Activated CD4-positive, alpha-beta T cell treated with anti-CD3 and anti-CD28 coated beads for 36 hours (primary cell): ENCODE measurements at regions of chr10 and their contacts with region 1.

Region 1: DNA sequence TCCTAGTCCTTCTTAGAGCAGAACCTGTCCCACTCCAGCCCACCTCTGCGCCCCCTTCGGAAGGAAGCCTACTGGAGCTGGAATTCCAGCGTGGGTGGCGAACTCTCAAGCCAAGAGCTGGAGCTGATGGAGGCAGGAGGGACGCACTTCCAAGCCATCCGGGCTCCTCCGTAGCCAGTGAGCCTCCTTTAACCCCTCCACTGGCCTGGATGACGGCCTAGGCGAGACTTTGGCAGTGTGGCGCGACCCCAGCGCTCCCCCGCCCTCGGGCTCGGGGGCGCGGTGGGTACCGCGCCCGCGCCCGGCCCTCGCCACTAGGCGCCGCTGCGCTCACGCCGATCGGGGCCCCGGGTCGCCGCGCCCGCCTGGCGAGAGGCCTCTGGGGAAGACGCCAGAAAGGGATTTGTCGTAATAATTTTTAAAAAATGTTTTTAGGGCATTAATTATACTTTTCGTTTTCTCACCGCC is 5.1 kb upstream of the EMX2 start:
- DNase-seq: peak; percentile 61
- ATAC-seq: peak; percentile 38
- H3K4me3 Mint-ChIP-seq: no peak overlapping the region
- H3K27ac Mint-ChIP-seq: no peak overlapping the region
- H3K4me1 Mint-ChIP-seq: peaks cover 14% of the 10 kb centered on the region
- H3K27me3 Mint-ChIP-seq: peaks cover 67% of the 10 kb centered on the region

Region 2: DNA sequence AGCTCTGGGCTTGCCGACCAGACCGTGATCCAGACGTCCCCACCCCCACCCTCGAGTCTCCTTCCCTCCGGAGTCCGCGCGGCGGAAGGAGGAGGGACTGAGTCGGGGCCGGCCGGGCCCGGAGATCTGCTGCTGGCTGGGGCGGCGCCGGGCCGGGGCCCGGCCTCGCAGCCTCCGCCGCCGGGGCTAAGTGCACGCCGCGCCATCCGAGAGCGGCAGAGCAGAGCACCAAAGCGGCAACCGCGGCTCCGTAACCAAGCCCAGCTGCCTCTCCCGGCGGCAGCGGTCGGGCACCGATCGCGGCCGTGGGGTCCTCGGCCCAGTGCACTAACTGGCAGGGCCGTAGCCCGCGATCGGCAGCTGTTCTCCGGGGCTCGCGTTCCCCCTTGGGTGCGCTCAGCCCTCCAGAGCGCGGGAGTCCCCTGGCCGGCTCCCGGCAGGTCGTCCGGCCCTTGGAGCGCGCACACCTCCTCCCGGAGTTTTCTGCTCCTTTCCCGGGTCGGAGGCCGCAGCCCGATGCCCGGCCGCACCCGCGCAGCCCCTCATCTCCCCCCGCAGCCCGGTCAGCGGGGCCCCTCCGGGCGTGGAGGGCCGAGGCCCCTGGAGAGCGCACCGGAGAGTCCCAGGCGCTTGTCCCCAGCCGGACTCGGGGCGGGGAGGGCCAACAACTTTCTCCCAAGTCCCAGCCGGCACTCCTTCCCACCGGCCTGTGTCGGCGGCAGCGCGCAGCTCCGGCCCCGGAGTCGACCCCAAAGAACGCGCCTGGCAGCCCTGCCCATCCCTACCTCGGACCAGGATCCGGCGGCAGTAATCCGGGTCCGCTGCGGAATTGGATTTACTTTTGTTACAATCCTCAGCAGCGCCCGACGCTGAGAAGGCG is 400.2 kb before region 1 on chr10:
- CTCF ChIA-PET with region 1: no interaction called
- POLR2A ChIA-PET with region 1: no interaction called
- intact Hi-C with region 1: loop called in 1 of 2 experiments (anchors 2 kb)
- DNase-seq: peak; percentile 31
- ATAC-seq: no peak
- H3K4me3 Mint-ChIP-seq: peak overlapping the region; percentile 23
- H3K27ac Mint-ChIP-seq: no peak overlapping the region
- H3K4me1 Mint-ChIP-seq: peaks cover 29% of the 10 kb centered on the region
- H3K27me3 Mint-ChIP-seq: peaks cover 66% of the 10 kb centered on the region

Region 3: DNA sequence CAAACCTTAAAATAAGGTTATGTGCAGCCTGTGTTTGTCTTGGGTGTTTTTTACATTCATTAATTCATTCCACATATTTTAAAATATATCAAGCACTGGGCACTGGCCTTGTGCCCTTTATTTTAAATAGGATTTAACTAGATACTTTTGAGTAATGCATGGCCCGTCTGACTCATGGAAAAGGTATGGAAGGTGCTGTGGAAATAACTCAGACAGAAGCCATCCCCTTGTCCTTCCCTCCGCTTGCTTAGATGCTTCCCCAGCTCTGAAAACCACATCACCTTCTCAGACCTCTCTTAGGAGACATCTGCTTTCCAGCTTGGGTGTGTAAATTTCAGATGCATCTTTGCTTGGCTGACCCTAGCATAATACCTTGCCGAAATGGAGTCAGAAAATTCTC is 266.0 kb before region 1 on chr10:
- CTCF ChIA-PET with region 1: no interaction called
- POLR2A ChIA-PET with region 1: no interaction called
- intact Hi-C with region 1: no loop called
- DNase-seq: no peak
- ATAC-seq: no peak
- H3K4me3 Mint-ChIP-seq: no peak overlapping the region
- H3K27ac Mint-ChIP-seq: no peak overlapping the region
- H3K4me1 Mint-ChIP-seq: no peaks in the 10 kb centered on the region
- H3K27me3 Mint-ChIP-seq: no peaks in the 10 kb centered on the region

Region 4: DNA sequence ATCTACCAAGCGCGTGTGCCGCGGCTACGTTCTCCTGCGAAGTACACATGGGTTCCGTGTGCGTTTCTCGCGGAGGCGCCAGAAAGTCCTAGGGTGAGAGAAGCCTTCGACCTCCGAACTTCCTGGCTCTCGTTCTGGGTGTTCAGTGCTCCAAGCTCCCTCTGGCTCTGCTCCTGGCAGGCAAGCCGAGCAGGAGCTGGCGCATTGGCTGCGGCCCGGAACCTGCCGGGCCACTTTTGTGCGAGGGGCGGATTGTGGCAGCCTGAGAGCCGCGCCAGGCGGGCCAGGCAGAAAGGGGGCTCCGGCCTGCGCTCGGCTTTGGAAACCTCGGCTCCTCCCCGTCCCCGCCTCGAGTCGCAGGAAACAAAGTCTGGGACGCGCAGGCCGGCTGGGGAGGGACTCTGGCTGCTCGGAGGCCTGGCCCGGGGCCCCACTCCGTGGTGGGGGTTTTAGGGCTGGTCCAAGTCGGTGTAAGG is 14.7 kb after region 1 on chr10:
- CTCF ChIA-PET with region 1: interaction called, 6 read pairs
- POLR2A ChIA-PET with region 1: no interaction called
- intact Hi-C with region 1: loop called (anchors 2 kb)
- DNase-seq: peak; percentile 18
- ATAC-seq: no peak
- H3K4me3 Mint-ChIP-seq: no peak overlapping the region
- H3K27ac Mint-ChIP-seq: no peak overlapping the region
- H3K4me1 Mint-ChIP-seq: peaks cover 11% of the 10 kb centered on the region
- H3K27me3 Mint-ChIP-seq: peaks cover 80% of the 10 kb centered on the region

Region 5: GRCh38 chr10:117581961-117582360 is 44.5 kb after region 1 on chr10:
- CTCF ChIA-PET with region 1: no interaction called
- POLR2A ChIA-PET with region 1: no interaction called
- intact Hi-C with region 1: no loop called
- DNase-seq: no peak
- ATAC-seq: no peak
- H3K4me3 Mint-ChIP-seq: no peak overlapping the region
- H3K27ac Mint-ChIP-seq: no peak overlapping the region
- H3K4me1 Mint-ChIP-seq: no peaks in the 10 kb centered on the region
- H3K27me3 Mint-ChIP-seq: peaks cover 18% of the 10 kb centered on the region

Region 6: GRCh38 chr10:117597216-117597615 is 59.7 kb after region 1 on chr10:
- CTCF ChIA-PET with region 1: no interaction called
- POLR2A ChIA-PET with region 1: no interaction called
- intact Hi-C with region 1: no loop called
- DNase-seq: no peak
- ATAC-seq: no peak
- H3K4me3 Mint-ChIP-seq: no peak overlapping the region
- H3K27ac Mint-ChIP-seq: no peak overlapping the region
- H3K4me1 Mint-ChIP-seq: no peaks in the 10 kb centered on the region
- H3K27me3 Mint-ChIP-seq: peaks cover 13% of the 10 kb centered on the region

Region 7: GRCh38 chr10:117736684-117737083 is 199.2 kb after region 1 on chr10:
- CTCF ChIA-PET with region 1: no interaction called
- POLR2A ChIA-PET with region 1: no interaction called
- intact Hi-C with region 1: loop called (anchors 5 to 10 kb)
- DNase-seq: no peak
- ATAC-seq: no peak
- H3K4me3 Mint-ChIP-seq: no peak overlapping the region
- H3K27ac Mint-ChIP-seq: no peak overlapping the region
- H3K4me1 Mint-ChIP-seq: no peaks in the 10 kb centered on the region
- H3K27me3 Mint-ChIP-seq: peaks cover 26% of the 10 kb centered on the region

Region 8: GRCh38 chr10:118106426-118106825 is 569.0 kb after region 1 on chr10:
- CTCF ChIA-PET with region 1: no interaction called
- POLR2A ChIA-PET with region 1: no interaction called
- intact Hi-C with region 1: loop called in 1 of 2 experiments (anchors 5 kb)
- DNase-seq: peak; percentile 5
- ATAC-seq: no peak
- H3K4me3 Mint-ChIP-seq: no peak overlapping the region
- H3K27ac Mint-ChIP-seq: no peak overlapping the region
- H3K4me1 Mint-ChIP-seq: no peaks in the 10 kb centered on the region
- H3K27me3 Mint-ChIP-seq: peaks cover 27% of the 10 kb centered on the region